ENCODE measurements at regions of chr1 and their contacts with region 1.

Region 1: GRCh38 chr1:159581422-159581821 is 6.2 kb upstream of the APCS start:
- DNase-seq: no peak

Region 2: DNA sequence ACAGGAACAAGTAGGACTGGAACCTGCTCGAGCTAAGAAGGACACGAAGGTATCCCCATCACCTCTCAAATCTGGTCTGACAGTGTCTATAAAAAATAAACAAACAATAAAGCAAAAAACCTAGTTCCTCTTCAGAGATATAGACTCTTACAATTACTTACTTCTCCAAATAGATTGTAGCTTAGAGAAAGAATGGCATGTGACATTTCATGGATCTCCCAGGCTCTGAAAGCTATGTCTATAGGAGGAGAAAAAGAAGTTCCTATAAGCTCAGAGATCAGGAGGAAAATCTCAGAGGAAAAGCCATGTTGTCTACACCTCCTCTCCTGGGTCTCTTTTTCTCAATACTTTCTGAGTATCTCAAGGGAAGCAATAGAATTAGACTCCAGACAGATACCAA is 33.3 kb before region 1 on chr1:
- intact Hi-C with region 1: no loop called
- DNase-seq: no peak

Region 3: DNA sequence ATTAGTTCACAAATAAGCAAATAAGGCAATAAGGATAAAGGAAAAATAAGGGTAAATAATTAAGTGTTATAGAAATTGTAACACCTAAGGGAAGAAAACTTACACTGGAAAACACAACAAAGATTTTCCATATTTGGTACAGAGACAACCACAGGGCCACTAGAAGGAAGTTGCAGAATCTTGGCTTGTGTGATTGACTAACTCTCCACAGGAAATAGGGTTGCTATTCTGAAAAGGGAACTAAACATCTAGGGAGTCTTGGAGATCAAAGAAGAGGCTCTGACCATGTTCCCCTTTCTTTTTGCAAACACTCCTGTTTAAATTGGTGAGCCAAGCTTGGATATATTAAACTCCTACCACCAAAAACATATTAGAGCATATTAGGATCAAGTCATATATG is 65.3 kb after region 1 on chr1:
- intact Hi-C with region 1: no loop called
- DNase-seq: no peak

Region 4: GRCh38 chr1:159715855-159716254 is 134.4 kb after region 1 on chr1:
- intact Hi-C with region 1: loop called in 1 of 2 experiments (anchors 1 kb)
- DNase-seq: no peak

Measured in posterior vena cava (tissue), 2 donors.